ENCODE measurements at regions of chr3 and their contacts with region 1.

Region 1: GRCh38 chr3:180601688-180602666 is at the start of gene TTC14:
- DNase-seq: peak; percentile 92
- H3K4me3 Mint-ChIP-seq: peak within 1 kb of the TSS; percentile 91
- H3K27ac Mint-ChIP-seq: peak within 1 kb of the TSS; percentile 95
- H3K4me1 Mint-ChIP-seq: peaks cover 23% of the 10 kb centered on the region
- H3K27me3 Mint-ChIP-seq: peaks cover 20% of the 10 kb centered on the region
- total RNA-seq, gene TTC14: 43.9 and 50.0 TPM in 2 replicates

Region 2: GRCh38 chr3:179347345-179348194 is 1254.4 kb before region 1 on chr3 and contains the start of gene MFN1:
- intact Hi-C with region 1: loop called (anchors 5 kb)
- DNase-seq: peak; percentile 87
- H3K4me3 Mint-ChIP-seq: peak within 1 kb of the TSS; percentile 98
- H3K27ac Mint-ChIP-seq: peak within 1 kb of the TSS; percentile 96
- H3K4me1 Mint-ChIP-seq: peaks cover 25% of the 10 kb centered on the region
- H3K27me3 Mint-ChIP-seq: no peaks in the 10 kb centered on the region
- total RNA-seq, gene MFN1: 29.5 and 37.7 TPM in 2 replicates

Region 3: DNA sequence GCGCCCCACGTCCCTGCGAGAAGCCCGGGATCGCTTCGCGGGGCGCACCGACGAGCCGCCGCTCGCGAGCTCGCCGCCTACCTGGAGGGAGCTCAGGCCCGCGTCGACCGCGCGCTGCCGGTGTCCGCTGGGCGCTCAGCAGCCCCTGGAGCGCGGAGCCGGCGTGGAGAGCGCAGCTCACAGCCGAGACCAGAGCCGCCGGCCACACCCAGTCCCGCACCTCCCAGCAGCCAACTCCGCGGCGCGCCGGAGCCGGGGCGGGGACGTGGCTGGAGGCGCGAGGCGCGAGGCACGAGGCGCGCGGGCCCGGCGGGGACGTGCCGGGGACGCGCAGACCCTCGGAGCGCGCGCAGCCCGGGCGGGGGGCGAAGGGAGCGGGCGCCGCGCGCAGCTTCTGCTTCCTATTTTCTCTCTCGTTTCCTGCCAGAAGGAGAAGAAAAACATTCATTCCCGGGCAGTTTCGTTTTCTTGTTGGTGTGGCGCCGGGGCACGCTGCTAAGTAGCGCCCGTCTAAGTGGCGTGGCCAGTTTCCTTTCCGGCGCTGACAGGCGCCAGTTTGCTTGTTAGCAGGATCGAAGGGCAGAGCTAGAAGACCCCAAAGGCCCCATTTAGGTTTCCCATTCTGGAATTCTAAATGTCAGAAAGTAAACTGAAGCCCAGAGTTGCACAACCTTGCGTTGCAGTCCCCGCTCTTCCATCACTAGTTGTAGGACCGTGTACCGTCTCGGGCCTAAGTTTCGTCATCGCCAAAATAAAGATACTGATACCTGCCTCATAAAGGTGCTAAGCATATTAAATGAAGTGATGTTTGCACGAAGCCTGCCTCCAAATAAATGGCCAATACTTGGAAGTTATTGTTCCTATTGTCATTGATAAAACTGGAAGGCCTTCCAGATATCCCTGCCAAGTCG is 1150.5 kb before region 1 on chr3 and contains the start of gene GNB4:
- intact Hi-C with region 1: loop called (anchors 10 kb)
- DNase-seq: peak; percentile 58
- H3K4me3 Mint-ChIP-seq: peak within 1 kb of the TSS; percentile 89
- H3K27ac Mint-ChIP-seq: peak within 1 kb of the TSS; percentile 91
- H3K4me1 Mint-ChIP-seq: peaks cover 39% of the 10 kb centered on the region
- H3K27me3 Mint-ChIP-seq: peaks cover 51% of the 10 kb centered on the region
- total RNA-seq, gene GNB4: 13.9 and 15.4 TPM in 2 replicates

Region 4: GRCh38 chr3:179604321-179605078 is 997.5 kb before region 1 on chr3 and contains the starts of genes MRPL47 and NDUFB5:
- intact Hi-C with region 1: loop called (anchors 1 kb)
- DNase-seq: peak; percentile 91
- H3K4me3 Mint-ChIP-seq: peak within 1 kb of the TSS; percentile 97
- H3K27ac Mint-ChIP-seq: peak within 1 kb of the TSS; percentile 99
- H3K4me1 Mint-ChIP-seq: peaks cover 36% of the 10 kb centered on the region
- H3K27me3 Mint-ChIP-seq: no peaks in the 10 kb centered on the region
- total RNA-seq, gene MRPL47: 65.1 and 65.5 TPM in 2 replicates
- total RNA-seq, gene NDUFB5: 81.5 and 86.1 TPM in 2 replicates

Region 5: GRCh38 chr3:180199417-180199995 is 402.5 kb before region 1 on chr3:
- intact Hi-C with region 1: no loop called
- DNase-seq: no peak
- H3K4me3 Mint-ChIP-seq: no peak overlapping the region
- H3K27ac Mint-ChIP-seq: no peak overlapping the region
- H3K4me1 Mint-ChIP-seq: no peaks in the 10 kb centered on the region
- H3K27me3 Mint-ChIP-seq: no peaks in the 10 kb centered on the region

Region 6: GRCh38 chr3:180563406-180563805 is 38.6 kb before region 1 on chr3:
- intact Hi-C with region 1: no loop called
- DNase-seq: no peak
- H3K4me3 Mint-ChIP-seq: no peak overlapping the region
- H3K27ac Mint-ChIP-seq: no peak overlapping the region
- H3K4me1 Mint-ChIP-seq: no peaks in the 10 kb centered on the region
- H3K27me3 Mint-ChIP-seq: no peaks in the 10 kb centered on the region

Region 7: GRCh38 chr3:180624714-180625113 is 22.7 kb after region 1 on chr3:
- intact Hi-C with region 1: loop called (anchors 1 kb)
- DNase-seq: no peak
- H3K4me3 Mint-ChIP-seq: peak overlapping the region; percentile 36
- H3K27ac Mint-ChIP-seq: peak overlapping the region; percentile 86
- H3K4me1 Mint-ChIP-seq: peaks cover 36% of the 10 kb centered on the region
- H3K27me3 Mint-ChIP-seq: no peaks in the 10 kb centered on the region

Region 8: GRCh38 chr3:180679178-180680096 is 77.5 kb after region 1 on chr3 and contains the start of gene CCDC39:
- intact Hi-C with region 1: loop called (anchors 2 kb)
- DNase-seq: peak; percentile 26
- H3K4me3 Mint-ChIP-seq: peak within 1 kb of the TSS; percentile 83
- H3K27ac Mint-ChIP-seq: peak within 1 kb of the TSS; percentile 64
- H3K4me1 Mint-ChIP-seq: peaks cover 22% of the 10 kb centered on the region
- H3K27me3 Mint-ChIP-seq: peaks cover 41% of the 10 kb centered on the region
- total RNA-seq, gene CCDC39: not detected in 2 replicates

Region 9: DNA sequence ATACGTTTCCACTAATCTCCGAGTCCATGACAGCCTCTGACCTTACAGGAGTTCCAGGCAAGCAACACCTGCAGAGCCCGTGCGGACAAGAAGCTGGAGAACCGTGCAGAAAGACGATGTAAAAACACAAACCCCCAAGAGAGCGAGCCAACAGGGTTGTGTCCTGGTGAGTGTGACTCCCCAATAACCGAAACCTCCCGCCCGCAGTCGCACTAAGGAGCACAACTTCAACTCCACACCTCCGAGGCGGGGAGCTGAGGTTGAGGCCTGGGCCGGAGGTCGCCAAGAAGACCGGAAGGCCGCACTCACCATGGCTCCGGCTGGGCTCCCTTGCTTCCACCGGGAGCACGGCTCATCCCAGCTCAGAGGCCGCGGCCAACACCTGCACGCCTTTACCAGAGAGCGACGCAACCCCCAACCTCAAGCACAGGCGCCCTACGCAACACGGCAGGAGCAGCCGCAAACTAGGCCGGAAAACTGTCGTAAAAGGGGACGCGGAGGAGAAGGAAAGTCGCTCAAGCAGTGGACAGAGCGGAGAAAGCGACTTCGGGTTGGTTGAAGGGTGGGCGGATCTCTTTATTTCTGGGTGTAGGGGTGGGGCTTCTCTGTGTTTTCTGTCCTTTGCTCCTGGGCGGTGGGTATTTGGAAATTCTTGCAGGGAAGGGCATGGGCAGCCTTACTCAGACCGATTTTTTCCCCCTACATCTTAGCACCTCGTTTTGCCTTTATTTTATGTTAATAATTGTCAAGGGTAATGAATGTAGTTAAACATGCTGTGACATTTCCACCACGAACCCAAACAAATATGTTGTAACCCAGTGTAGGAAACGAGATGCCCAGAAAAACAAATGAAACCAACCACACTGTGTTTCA is 387.6 kb after region 1 on chr3 and contains the start of gene DNAJC19:
- intact Hi-C with region 1: loop called (anchors 1 kb)
- DNase-seq: peak; percentile 86
- H3K4me3 Mint-ChIP-seq: peak within 1 kb of the TSS; percentile 91
- H3K27ac Mint-ChIP-seq: peak within 1 kb of the TSS; percentile 88
- H3K4me1 Mint-ChIP-seq: peaks cover 14% of the 10 kb centered on the region
- H3K27me3 Mint-ChIP-seq: no peaks in the 10 kb centered on the region
- total RNA-seq, gene DNAJC19: 59.3 and 60.8 TPM in 2 replicates

Region 10: DNA sequence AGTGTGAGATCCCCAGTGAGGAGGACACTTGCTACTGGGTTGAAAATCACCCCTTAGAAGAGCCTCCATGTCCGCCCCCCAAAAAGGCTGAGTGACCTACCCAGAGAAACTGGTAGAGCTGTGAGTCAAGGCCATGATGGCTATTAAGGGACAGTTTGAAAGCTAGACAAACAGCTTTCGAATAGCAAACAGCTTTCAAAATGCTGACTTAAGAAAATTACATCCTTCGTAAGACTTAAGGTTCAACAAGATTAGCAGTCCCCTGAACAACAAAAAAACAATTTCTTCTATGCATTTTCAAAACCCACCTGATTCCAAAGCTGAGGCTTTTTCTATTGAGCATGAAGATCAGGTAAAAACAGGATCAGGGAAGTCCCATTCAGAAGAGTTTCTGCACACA is 840.1 kb after region 1 on chr3:
- intact Hi-C with region 1: no loop called
- DNase-seq: no peak
- H3K4me3 Mint-ChIP-seq: no peak overlapping the region
- H3K27ac Mint-ChIP-seq: no peak overlapping the region
- H3K4me1 Mint-ChIP-seq: no peaks in the 10 kb centered on the region
- H3K27me3 Mint-ChIP-seq: no peaks in the 10 kb centered on the region